ENCODE measurements at regions of chr17 and their contacts with region 1.

Region 1: GRCh38 chr17:10875979-10876555 is 38.2 kb upstream of the PIRT start:
- DNase-seq: no peak
- H3K4me3 ChIP-seq: no peak overlapping the region
- H3K27ac ChIP-seq: no peak overlapping the region
- H3K4me1 ChIP-seq: no peaks in the 10 kb centered on the region
- H3K27me3 ChIP-seq: peaks cover 0 to 32% (median 0%) of the 10 kb centered on the region in 4 donors
- CTCF ChIP-seq: peak; percentile 45 to 60 (median 51)
- EP300 ChIP-seq: no peak
- POLR2A ChIP-seq: no peak

Region 2: GRCh38 chr17:10976401-10976800 is 100.3 kb after region 1 on chr17:
- intact Hi-C with region 1: no loop called
- DNase-seq: no peak
- H3K4me3 ChIP-seq: no peak overlapping the region
- H3K27ac ChIP-seq: no peak overlapping the region
- H3K4me1 ChIP-seq: no peaks in the 10 kb centered on the region
- H3K27me3 ChIP-seq: no peaks in the 10 kb centered on the region
- CTCF ChIP-seq: no peak
- EP300 ChIP-seq: no peak
- POLR2A ChIP-seq: no peak

Region 3: GRCh38 chr17:11144358-11145233 is 268.5 kb after region 1 on chr17:
- intact Hi-C with region 1: loop called (anchors 10 kb)
- DNase-seq: no peak
- H3K4me3 ChIP-seq: no peak overlapping the region
- H3K27ac ChIP-seq: no peak overlapping the region
- H3K4me1 ChIP-seq: no peaks in the 10 kb centered on the region
- H3K27me3 ChIP-seq: no peaks in the 10 kb centered on the region
- CTCF ChIP-seq: peak; percentile 23 to 42 (median 25)
- EP300 ChIP-seq: no peak
- POLR2A ChIP-seq: no peak

Region 4: GRCh38 chr17:11986942-11987329 is 1110.9 kb after region 1 on chr17:
- intact Hi-C with region 1: loop called (anchors 5 kb)
- DNase-seq: no peak
- H3K4me3 ChIP-seq: no peak overlapping the region
- H3K27ac ChIP-seq: no peak overlapping the region
- H3K4me1 ChIP-seq: peaks cover 0 to 7% (median 5%) of the 10 kb centered on the region in 4 donors
- H3K27me3 ChIP-seq: no peaks in the 10 kb centered on the region
- CTCF ChIP-seq: peak; percentile 53 to 59 (median 54)
- EP300 ChIP-seq: no peak
- POLR2A ChIP-seq: no peak